CD8-positive, alpha-beta T cell (primary cell): ENCODE measurements at regions of chr7 and their contacts with region 1.

Region 1: GRCh38 chr7:116741625-116742316 is 69.8 kb downstream of the MET start:
- DNase-seq: no peak
- ATAC-seq: no peak
- H3K4me3 ChIP-seq: no peak overlapping the region
- H3K4me3 Mint-ChIP-seq: no peak overlapping the region
- H3K27ac ChIP-seq: no peak overlapping the region
- H3K27ac Mint-ChIP-seq: no peak overlapping the region
- H3K4me1 ChIP-seq: no peaks in the 10 kb centered on the region
- H3K4me1 Mint-ChIP-seq: no peaks in the 10 kb centered on the region
- H3K27me3 ChIP-seq: no peaks in the 10 kb centered on the region
- H3K27me3 Mint-ChIP-seq: peaks cover 6% of the 10 kb centered on the region
- CTCF ChIP-seq: no peak

Region 2: GRCh38 chr7:116525913-116526861 is 215.6 kb before region 1 on chr7:
- CTCF ChIA-PET with region 1: no interaction called
- POLR2A ChIA-PET with region 1: no interaction called
- intact Hi-C with region 1: no loop called
- DNase-seq: peak; percentile 19 to 80 (median 59)
- ATAC-seq: peak; percentile 92
- H3K4me3 ChIP-seq: peak overlapping the region; percentile 59 to 67
- H3K4me3 Mint-ChIP-seq: peak overlapping the region; percentile 83
- H3K27ac ChIP-seq: no peak overlapping the region
- H3K27ac Mint-ChIP-seq: no peak overlapping the region
- H3K4me1 ChIP-seq: peaks cover 21% of the 10 kb centered on the region
- H3K4me1 Mint-ChIP-seq: peaks cover 25% of the 10 kb centered on the region
- H3K27me3 ChIP-seq: peaks cover 15 to 31% of the 10 kb centered on the region in 2 experiments
- H3K27me3 Mint-ChIP-seq: peaks cover 60% of the 10 kb centered on the region
- CTCF ChIP-seq: peak; percentile 59

Region 3: DNA sequence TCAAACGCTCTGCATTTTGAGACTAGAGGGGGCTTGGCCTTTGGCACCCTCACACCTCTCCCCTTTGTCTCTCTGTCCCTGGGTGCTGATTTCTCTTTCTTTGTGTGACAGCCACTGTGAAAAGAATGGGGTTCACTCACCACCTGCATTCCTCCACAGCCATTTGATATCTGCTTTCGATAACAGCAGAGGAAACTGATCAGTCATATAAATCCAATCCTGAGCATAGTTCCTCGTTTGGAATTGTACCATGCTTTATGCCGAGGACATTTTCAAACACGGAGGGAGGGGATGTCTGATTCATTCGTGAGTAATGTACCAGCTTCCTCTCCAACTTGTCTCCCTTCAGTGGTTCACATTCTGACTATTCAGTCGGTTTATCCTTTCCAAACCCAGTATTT is 54.0 kb before region 1 on chr7:
- CTCF ChIA-PET with region 1: no interaction called
- POLR2A ChIA-PET with region 1: no interaction called
- intact Hi-C with region 1: no loop called
- DNase-seq: no peak
- ATAC-seq: no peak
- H3K4me3 ChIP-seq: no peak overlapping the region
- H3K4me3 Mint-ChIP-seq: no peak overlapping the region
- H3K27ac ChIP-seq: no peak overlapping the region
- H3K27ac Mint-ChIP-seq: no peak overlapping the region
- H3K4me1 ChIP-seq: no peaks in the 10 kb centered on the region
- H3K4me1 Mint-ChIP-seq: no peaks in the 10 kb centered on the region
- H3K27me3 ChIP-seq: no peaks in the 10 kb centered on the region
- H3K27me3 Mint-ChIP-seq: peaks cover 25% of the 10 kb centered on the region
- CTCF ChIP-seq: no peak

Region 4: DNA sequence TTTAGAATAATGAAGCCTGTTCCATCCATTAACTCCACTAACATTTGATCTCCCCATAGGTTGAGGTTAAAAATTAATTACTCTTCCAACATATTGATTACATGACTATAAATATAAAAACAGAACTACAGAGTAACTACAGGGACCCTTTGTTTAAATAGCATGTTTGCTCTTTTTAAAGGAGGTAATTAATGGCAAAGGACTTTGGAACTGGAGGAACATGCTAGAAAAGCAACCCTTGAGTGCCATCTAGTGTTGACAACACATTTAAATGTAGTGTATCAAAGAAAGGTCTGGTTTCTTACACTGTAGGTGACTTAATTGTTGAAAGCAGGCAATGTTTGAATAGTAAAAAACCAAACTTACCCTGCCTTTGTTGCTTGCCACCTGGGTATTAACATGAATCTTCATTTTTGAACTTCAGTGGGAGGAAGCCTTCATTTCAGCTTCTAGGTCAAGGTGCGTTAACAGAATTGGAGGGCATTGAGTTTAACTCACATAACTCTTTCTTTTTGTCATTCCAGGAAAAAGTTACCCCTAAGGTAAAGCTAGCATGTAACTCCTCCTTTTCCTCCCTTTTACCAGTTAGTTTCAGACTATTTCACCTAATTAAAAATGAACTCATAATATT is 68.0 kb after region 1 on chr7:
- CTCF ChIA-PET with region 1: no interaction called
- POLR2A ChIA-PET with region 1: no interaction called
- intact Hi-C with region 1: loop called in 1 of 2 experiments (anchors 10 kb)
- DNase-seq: peak in 2 of 9 experiments; percentile 52 to 60
- ATAC-seq: no peak
- H3K4me3 ChIP-seq: no peak overlapping the region
- H3K4me3 Mint-ChIP-seq: no peak overlapping the region
- H3K27ac ChIP-seq: no peak overlapping the region
- H3K27ac Mint-ChIP-seq: no peak overlapping the region
- H3K4me1 ChIP-seq: no peaks in the 10 kb centered on the region
- H3K4me1 Mint-ChIP-seq: no peaks in the 10 kb centered on the region
- H3K27me3 ChIP-seq: no peaks in the 10 kb centered on the region
- H3K27me3 Mint-ChIP-seq: peaks cover 6% of the 10 kb centered on the region
- CTCF ChIP-seq: peak; percentile 58